PC-9 (cell line): ENCODE measurements at regions of chr18 and their contacts with region 1.

Region 1: DNA sequence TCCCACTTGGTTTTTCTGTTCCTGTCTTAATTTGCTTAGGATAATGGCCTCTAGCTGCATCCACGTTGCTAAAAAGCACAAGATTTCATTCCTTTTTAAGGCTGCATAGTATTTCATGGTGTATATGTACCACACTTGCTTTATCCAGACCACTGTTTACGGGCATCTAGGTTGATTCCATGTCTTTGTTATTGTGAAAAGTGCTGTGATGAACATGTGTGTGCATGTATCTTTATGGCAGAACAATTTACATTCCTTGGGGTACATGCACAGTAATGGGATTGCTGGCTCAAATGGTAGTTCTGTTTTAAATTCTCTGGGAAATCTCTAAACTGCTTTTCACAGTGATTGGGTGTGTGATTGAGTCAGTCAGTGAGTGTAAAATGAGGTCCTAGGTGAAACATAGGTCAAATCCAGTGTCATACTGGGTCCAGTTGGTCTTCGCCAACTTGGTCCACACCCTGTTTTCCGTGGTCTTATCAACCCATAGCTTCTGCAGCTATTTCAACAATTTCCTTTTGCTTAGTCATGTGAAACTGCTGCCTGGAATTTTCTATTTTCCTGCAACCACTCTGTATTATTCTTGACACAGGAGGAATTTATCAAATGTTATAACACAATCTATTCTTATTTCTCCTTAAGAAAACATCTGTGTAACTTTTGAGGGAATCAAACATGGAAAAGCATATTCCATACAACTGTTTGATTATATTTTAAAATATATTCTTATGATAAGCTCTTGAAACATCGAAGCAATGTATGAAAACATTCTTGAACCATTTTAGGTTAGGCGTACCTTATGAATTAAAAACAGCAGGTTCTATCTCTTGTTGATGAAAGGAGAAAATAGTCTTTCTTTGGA is 82.9 kb downstream of the ADCYAP1 start:
- DNase-seq: peak; percentile 25 to 70
- H3K4me3 ChIP-seq: no peak overlapping the region
- H3K27ac ChIP-seq: peak overlapping the region; percentile 59
- H3K4me1 ChIP-seq: peaks cover 10% of the 10 kb centered on the region
- H3K27me3 ChIP-seq: no peaks in the 10 kb centered on the region
- CTCF ChIP-seq: no peak

Region 2: DNA sequence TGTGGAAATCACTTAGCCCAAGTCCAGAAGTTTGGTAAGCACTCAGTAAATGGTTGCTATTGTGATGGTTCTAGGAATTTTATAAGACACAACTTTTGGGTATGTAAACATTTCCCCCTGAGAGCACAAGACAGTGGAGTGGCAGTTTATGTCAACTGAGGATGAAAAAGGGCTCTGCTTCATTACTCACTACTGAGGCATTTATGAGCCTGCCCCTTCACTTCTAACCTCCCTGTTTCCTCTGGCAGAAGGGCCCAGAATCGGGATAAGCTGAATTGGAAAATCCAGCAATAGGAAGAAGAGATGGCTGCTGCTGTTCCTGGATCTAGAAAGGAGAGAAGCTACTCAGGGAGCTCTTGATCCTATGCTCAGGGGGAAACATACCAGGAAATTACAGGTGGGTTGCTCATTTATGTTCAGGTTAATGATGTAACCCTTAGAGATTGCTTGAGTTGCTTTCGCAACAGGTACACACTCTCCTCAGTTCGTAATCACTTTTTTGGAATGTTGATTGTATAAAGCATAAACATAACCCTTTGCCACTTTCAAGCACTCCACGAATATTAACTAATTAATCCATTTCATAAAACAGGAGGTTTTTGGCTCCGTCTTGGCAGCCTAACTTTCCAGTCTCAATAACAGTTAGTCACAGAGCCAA is 36.5 kb before region 1 on chr18:
- CTCF ChIA-PET with region 1: interaction called, 22 read pairs
- POLR2A ChIA-PET with region 1: no interaction called
- intact Hi-C with region 1: no loop called
- DNase-seq: peak; percentile 6 to 80
- H3K4me3 ChIP-seq: peak overlapping the region; percentile 12; the same call in 1 of the 2 replicates
- H3K27ac ChIP-seq: peak overlapping the region; percentile 66
- H3K4me1 ChIP-seq: peaks cover 24% of the 10 kb centered on the region
- H3K27me3 ChIP-seq: no peaks in the 10 kb centered on the region
- CTCF ChIP-seq: no peak

Region 3: GRCh38 chr18:1227025-1227424 is 239.5 kb after region 1 on chr18:
- CTCF ChIA-PET with region 1: interaction called, 15 read pairs
- POLR2A ChIA-PET with region 1: no interaction called
- intact Hi-C with region 1: no loop called
- DNase-seq: no peak
- H3K4me3 ChIP-seq: no peak overlapping the region
- H3K27ac ChIP-seq: no peak overlapping the region
- H3K4me1 ChIP-seq: no peaks in the 10 kb centered on the region
- H3K27me3 ChIP-seq: no peaks in the 10 kb centered on the region
- CTCF ChIP-seq: no peak